Kidney (tissue), 22 donors: ENCODE measurements at regions of chr16 and their contacts with region 1.

Region 1: DNA sequence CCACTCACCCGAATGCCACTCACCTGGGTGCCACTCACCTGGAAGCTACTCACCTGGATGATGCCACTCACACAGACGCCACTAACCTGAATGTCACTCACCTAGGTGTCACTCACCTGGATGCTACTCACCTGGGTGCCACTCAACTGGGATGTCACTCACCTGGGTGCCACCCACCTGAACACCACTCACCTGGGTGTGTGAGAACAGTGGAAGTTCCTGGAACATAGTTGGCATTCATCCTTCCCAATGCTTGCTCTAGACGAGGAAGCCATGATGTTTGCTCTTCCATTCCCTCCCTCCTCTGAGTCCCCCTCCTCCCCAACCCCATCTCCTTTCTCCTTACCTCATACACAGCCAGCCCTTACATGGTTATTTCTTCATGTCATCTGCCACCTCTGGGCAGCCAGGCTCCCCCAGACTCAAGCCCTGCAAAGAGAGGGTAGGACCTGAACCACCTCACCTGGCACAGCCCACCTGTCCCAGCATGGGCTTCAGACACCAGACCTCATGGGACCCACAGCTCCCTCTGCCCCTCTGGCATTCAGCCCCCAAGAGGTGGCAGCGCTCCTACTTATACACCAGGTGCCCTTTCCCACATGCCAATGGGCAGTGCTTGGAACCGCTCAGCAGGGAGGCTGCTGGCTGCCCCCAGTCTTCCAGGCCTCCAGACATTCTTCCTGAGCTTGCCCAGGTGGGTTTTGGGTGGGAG is 171.8 kb upstream of the FOXF1 start:
- DNase-seq: no peak
- H3K4me3 ChIP-seq: no peak overlapping the region
- H3K27ac ChIP-seq: no peak overlapping the region
- H3K4me1 ChIP-seq: no peaks in the 10 kb centered on the region
- H3K27me3 ChIP-seq: peaks cover 23% of the 10 kb centered on the region
- CTCF ChIP-seq: no peak

Region 2: DNA sequence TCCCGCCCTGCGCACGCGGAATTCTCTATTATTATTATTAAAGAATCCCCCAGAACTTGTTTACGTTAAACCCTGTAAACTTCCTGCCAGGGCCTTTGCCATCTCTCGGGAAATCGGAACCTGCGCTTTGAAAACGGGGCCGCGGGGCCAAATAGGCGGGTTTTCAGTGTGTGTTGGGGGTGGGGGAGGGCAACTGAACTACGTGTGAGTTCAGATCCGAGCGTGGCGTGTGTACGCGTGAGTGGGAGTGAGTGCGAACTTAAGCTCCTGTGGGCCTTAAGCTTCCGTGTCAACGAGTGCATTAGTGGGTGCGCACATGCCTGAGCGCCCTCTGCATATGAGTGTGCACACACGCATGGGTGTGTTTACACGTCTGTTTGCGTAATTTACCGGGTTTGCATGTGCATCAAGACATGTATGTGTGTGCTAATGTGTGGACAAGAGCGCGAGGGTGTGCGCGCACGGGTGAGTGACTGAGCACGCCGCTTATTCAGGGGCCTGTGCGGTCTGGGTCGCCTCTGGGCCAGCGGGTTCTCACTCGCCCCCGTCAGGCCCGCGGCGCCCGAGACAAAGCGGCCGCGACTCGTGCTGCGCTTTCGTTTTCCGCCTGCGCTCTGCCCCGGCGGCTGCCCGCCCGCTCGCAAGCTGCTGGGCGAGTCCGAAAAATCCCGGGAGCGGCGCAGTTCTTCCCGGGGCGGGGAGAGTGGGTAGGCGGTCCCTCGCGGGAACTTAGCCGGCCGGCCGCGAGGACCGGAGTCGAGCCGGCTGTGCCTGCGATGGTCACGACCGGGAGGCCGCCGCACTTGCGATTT is 170.6 kb after region 1 on chr16:
- intact Hi-C with region 1: loop called (anchors 10 kb)
- DNase-seq: peak in 4 of 5 donors; percentile 63 to 87 (median 72)
- H3K4me3 ChIP-seq: peak overlapping the region; percentile 16 to 60 (median 48)
- H3K27ac ChIP-seq: peak overlapping the region; percentile 76 to 77
- H3K4me1 ChIP-seq: peaks cover 0 to 15% (median 0%) of the 10 kb centered on the region in 3 donors
- H3K27me3 ChIP-seq: peaks cover 60% of the 10 kb centered on the region
- CTCF ChIP-seq: no peak